Activated CD4-positive, alpha-beta T cell treated with anti-CD3 and anti-CD28 coated beads for 36 hours (primary cell): ENCODE measurements at regions of chr19 and their contacts with region 1.

Region 1: DNA sequence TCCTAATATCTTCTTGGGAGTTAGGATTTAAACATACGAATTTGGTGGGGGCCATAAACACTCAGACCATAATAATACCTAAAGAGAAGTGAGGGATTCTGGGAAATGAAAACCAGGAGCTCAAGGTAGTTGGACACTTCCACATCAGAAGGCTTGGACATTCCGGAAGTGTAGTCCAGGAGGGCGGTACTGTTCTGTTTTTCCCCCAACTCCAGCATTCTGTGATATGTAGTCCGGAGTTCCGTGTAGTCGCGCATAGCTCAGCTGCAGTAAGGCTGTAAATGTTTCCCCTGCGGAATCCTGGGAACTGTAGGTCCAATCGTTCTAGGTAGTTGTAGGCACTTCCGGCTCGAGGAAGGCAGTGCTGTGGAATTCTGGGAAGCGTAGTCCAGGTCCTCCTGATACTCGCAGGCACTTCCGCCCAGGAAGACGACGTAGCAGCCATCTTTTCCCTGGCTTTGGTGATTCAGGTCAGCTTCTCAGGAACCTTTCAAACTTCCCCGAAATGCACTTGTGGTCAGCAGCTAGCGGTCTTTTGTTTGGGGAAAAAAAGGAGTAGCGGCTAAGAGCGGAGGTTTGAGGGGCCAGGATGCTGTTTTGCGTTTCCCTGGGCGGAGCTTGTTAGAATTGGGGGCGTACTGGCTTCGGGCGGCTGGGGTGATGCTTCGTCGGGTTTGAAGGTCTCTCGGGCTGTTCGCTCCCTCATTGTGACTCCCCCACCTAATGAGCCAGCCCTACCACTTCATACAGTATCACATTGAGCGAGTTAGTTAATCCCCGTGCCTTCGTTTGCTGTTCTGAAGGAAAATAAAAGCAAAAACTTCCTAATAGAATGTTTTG is at the start of gene ZNF226:
- DNase-seq: peak; percentile 87
- ATAC-seq: peak; percentile 89
- H3K4me3 Mint-ChIP-seq: peak within 1 kb of the TSS; percentile 87
- H3K27ac Mint-ChIP-seq: peak within 1 kb of the TSS; percentile 96
- H3K4me1 Mint-ChIP-seq: peaks cover 30% of the 10 kb centered on the region
- H3K27me3 Mint-ChIP-seq: no peaks in the 10 kb centered on the region
- total RNA-seq, gene ZNF226: 11.3 to 15.2 TPM

Region 2: DNA sequence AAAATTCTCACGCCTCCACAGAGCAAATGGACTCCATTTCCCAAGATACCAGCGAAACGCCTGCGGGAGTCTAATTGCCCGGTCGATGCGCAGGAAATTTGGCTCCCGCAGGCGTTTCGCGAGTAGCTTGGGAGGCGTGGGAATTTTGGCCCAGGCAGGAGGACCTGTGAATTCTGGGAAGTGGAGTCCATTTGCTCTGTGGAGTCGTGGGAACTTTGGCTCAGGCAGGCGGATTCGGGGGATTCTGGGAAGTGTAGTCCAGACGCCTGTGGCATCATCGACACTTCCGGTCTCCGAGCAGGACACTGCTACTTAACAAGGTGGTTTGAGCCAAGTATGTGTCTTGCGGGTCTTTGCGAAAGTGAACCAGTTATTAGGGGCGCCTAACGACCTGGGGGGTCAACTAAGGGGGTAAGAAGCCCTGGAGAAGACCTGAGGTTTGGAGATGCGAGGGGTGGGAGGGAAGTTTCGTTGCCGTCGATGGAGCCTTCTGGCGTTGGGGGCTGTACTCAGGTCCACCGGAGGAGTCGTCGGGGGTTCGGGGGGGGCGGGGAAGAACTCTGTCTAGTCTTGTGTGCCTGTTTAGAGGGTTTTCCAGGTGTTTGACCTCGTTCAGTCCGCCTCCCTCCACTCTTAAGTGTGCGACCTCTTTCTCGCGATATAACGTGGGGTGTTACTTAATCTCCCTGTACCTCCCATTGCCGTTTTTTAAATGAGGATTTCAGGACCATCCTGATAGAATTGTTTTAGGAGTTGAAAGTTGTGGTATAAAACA is 180.8 kb before region 1 on chr19 and contains the start of gene ZNF155:
- CTCF ChIA-PET with region 1: no interaction called
- POLR2A ChIA-PET with region 1: no interaction called
- intact Hi-C with region 1: loop called in 1 of 2 experiments (anchors 1 kb)
- DNase-seq: peak; percentile 82
- ATAC-seq: peak; percentile 97
- H3K4me3 Mint-ChIP-seq: peak within 1 kb of the TSS; percentile 90
- H3K27ac Mint-ChIP-seq: peak within 1 kb of the TSS; percentile 92
- H3K4me1 Mint-ChIP-seq: peaks cover 11% of the 10 kb centered on the region
- H3K27me3 Mint-ChIP-seq: no peaks in the 10 kb centered on the region
- total RNA-seq, gene ZNF155: 4.5 to 6.0 TPM

Region 3: DNA sequence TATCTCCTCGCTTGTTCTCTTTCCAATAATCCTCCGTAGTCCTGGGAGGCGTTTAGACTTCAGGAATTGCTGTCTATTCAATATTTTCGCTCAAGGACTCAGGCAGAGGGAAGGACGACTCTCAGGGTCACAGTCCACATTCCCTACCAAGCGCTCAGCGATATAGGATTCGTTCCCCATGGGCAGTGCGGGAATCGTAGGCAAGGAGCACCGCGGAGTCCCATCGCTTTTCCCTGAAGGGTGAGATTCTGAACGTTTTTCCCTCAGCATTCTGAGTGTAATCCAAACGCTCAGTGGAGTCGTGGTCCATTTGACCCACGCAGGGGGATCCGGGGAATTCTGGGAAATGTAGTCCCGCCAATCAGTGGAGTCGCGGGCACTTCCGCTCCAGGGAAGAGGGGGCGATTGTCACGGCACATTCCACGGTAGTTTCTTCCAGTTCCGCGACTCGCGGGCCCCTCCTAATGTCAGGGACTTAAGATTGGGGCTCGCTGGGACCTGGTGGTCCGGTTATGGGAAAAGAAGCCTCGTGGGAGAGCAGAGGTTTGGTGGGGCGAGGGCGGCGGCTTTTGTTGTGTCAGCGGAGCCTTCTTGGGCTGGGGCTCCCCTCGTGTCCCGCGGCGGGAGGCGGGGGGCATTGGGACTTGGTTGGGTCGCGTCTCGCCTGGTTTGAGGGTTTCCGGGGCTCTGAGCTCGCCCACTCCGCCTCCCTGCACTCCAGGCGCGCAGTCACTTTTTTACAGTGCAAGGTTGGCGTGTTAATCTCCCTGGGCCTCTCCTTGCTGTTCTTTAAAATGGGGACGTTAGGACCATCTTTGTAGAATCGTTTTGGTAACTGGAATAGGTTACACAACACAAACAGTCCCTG is 23.5 kb before region 1 on chr19 and contains the start of gene ZNF234:
- CTCF ChIA-PET with region 1: no interaction called
- POLR2A ChIA-PET with region 1: no interaction called
- intact Hi-C with region 1: loop called (anchors 1 to 2 kb)
- DNase-seq: peak; percentile 82
- ATAC-seq: peak; percentile 92
- H3K4me3 Mint-ChIP-seq: peak within 1 kb of the TSS; percentile 92
- H3K27ac Mint-ChIP-seq: peak within 1 kb of the TSS; percentile 94
- H3K4me1 Mint-ChIP-seq: peaks cover 12% of the 10 kb centered on the region
- H3K27me3 Mint-ChIP-seq: no peaks in the 10 kb centered on the region
- total RNA-seq, gene ZNF234: 7.9 to 10.4 TPM

Region 4: DNA sequence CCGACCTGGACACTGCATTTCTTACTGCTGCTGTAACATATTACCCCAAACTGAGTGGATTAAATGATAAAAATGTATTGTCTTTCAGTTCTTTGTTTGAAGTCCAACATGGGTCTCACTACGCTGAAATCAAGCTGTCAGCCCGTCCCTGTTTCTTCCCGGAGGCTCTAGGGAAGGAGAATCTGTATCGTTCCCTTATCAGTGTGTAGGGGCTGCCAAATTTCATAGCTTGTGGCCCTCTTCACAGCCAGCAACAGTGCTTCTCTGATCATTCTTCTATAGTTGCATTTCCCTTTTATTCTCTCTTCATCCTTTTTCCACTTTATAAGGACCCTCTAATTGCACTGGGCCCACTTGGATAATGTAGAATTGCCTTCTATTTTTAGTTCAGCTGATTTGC is 13.4 kb before region 1 on chr19:
- CTCF ChIA-PET with region 1: no interaction called
- POLR2A ChIA-PET with region 1: no interaction called
- intact Hi-C with region 1: no loop called
- DNase-seq: no peak
- ATAC-seq: no peak
- H3K4me3 Mint-ChIP-seq: no peak overlapping the region
- H3K27ac Mint-ChIP-seq: no peak overlapping the region
- H3K4me1 Mint-ChIP-seq: no peaks in the 10 kb centered on the region
- H3K27me3 Mint-ChIP-seq: no peaks in the 10 kb centered on the region

Region 5: GRCh38 chr19:44182145-44182544 is 17.3 kb after region 1 on chr19:
- CTCF ChIA-PET with region 1: no interaction called
- POLR2A ChIA-PET with region 1: no interaction called
- intact Hi-C with region 1: no loop called
- DNase-seq: no peak
- ATAC-seq: no peak
- H3K4me3 Mint-ChIP-seq: no peak overlapping the region
- H3K27ac Mint-ChIP-seq: no peak overlapping the region
- H3K4me1 Mint-ChIP-seq: no peaks in the 10 kb centered on the region
- H3K27me3 Mint-ChIP-seq: no peaks in the 10 kb centered on the region

Region 6: GRCh38 chr19:44212250-44212865 is 47.5 kb after region 1 on chr19 and contains the start of gene ZNF227:
- CTCF ChIA-PET with region 1: no interaction called
- POLR2A ChIA-PET with region 1: interaction called, 5 read pairs
- intact Hi-C with region 1: loop called (anchors 1 kb)
- DNase-seq: peak; percentile 90
- ATAC-seq: peak; percentile 98
- H3K4me3 Mint-ChIP-seq: peak within 1 kb of the TSS; percentile 90
- H3K27ac Mint-ChIP-seq: peak within 1 kb of the TSS; percentile 92
- H3K4me1 Mint-ChIP-seq: peaks cover 22% of the 10 kb centered on the region
- H3K27me3 Mint-ChIP-seq: no peaks in the 10 kb centered on the region
- total RNA-seq, gene ZNF227: 19.4 to 20.6 TPM

Region 7: GRCh38 chr19:44278181-44278690 is 113.3 kb after region 1 on chr19:
- CTCF ChIA-PET with region 1: no interaction called
- POLR2A ChIA-PET with region 1: no interaction called
- intact Hi-C with region 1: no loop called
- DNase-seq: no peak
- ATAC-seq: no peak
- H3K4me3 Mint-ChIP-seq: no peak overlapping the region
- H3K27ac Mint-ChIP-seq: no peak overlapping the region
- H3K4me1 Mint-ChIP-seq: no peaks in the 10 kb centered on the region
- H3K27me3 Mint-ChIP-seq: no peaks in the 10 kb centered on the region

Region 8: GRCh38 chr19:44401139-44402115 is 236.5 kb after region 1 on chr19 and contains the start of gene ZNF285:
- CTCF ChIA-PET with region 1: no interaction called
- POLR2A ChIA-PET with region 1: no interaction called
- intact Hi-C with region 1: loop called in 1 of 2 experiments (anchors 1 kb)
- DNase-seq: peak; percentile 91
- ATAC-seq: peak; percentile 99
- H3K4me3 Mint-ChIP-seq: peak within 1 kb of the TSS; percentile 75
- H3K27ac Mint-ChIP-seq: peak within 1 kb of the TSS; percentile 76
- H3K4me1 Mint-ChIP-seq: peaks cover 10% of the 10 kb centered on the region
- H3K27me3 Mint-ChIP-seq: no peaks in the 10 kb centered on the region
- total RNA-seq, gene ZNF285: 1.2 to 1.4 TPM

Region 9: GRCh38 chr19:44552324-44552723 is 387.4 kb after region 1 on chr19:
- CTCF ChIA-PET with region 1: no interaction called
- POLR2A ChIA-PET with region 1: no interaction called
- intact Hi-C with region 1: no loop called
- DNase-seq: peak; percentile 76
- ATAC-seq: peak; percentile 81
- H3K4me3 Mint-ChIP-seq: no peak overlapping the region
- H3K27ac Mint-ChIP-seq: no peak overlapping the region
- H3K4me1 Mint-ChIP-seq: no peaks in the 10 kb centered on the region
- H3K27me3 Mint-ChIP-seq: no peaks in the 10 kb centered on the region